H1 (cell line): ENCODE measurements at regions of chr18 and their contacts with region 1.

Region 1: GRCh38 chr18:35756506-35757117 is 175.1 kb downstream of the GALNT1 start:
- DNase-seq: peak; percentile 19 to 67
- H3K4me3 ChIP-seq: no peak overlapping the region
- H3K27ac ChIP-seq: no peak overlapping the region
- H3K4me1 ChIP-seq: peaks cover 0 to 7% (median 1%) of the 10 kb centered on the region in 4 experiments; a peak in 3 of 7 replicates
- H3K27me3 ChIP-seq: no peaks in the 10 kb centered on the region
- CTCF ChIP-seq: peak in 2 of 3 experiments; percentile 73 to 81; a peak in 3 of 4 replicates
- EP300 ChIP-seq: no peak
- POLR2A ChIP-seq: no peak
- RAD21 ChIP-seq: peak; percentile 99 to 100

Region 2: DNA sequence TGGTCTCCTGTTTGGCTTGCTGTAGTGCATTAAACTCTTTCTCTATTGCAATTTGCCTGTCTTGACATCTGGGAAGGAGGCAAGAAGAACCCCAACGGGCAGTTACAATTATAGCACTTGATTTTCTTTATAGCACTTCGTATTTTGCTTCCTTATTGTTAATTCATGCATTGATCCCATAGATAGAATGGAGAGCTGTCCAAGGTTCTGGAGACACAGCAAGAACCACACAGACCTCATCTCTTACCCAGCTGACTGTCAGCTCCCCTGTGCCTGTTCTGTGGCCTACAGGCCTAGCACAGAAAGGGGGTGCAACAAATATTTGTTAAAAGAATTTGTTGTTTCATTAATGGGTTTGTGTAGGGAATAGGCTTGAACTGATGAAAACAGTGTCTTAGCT is 19.3 kb after region 1 on chr18:
- CTCF ChIA-PET with region 1: interaction called, 13 read pairs
- POLR2A ChIA-PET with region 1: no interaction called
- DNase-seq: no peak
- H3K4me3 ChIP-seq: no peak overlapping the region
- H3K27ac ChIP-seq: no peak overlapping the region
- H3K4me1 ChIP-seq: no peaks in the 10 kb centered on the region
- H3K27me3 ChIP-seq: no peaks in the 10 kb centered on the region
- CTCF ChIP-seq: no peak
- EP300 ChIP-seq: no peak
- POLR2A ChIP-seq: no peak
- RAD21 ChIP-seq: no peak

Region 3: DNA sequence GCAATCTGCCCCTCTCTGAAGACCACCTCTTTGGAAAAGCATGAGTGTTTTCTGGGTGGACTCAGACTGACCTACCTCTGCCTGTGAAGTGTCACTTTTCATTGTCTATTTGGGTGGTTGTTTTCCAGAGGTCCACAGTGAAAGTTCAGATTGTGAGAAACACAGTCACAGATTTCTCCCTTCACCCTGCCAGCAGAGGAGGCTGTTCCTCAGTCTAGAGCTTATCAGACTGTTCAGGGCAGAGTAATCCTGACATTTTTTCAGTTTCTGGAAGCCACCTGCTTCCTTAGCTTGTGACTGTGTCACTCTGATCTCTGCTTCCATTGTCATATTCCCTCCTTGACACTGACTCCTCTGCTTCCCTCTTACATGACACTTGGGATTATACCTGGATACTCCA is 160.4 kb after region 1 on chr18:
- CTCF ChIA-PET with region 1: interaction called, 10 read pairs
- POLR2A ChIA-PET with region 1: no interaction called
- DNase-seq: no peak
- H3K4me3 ChIP-seq: no peak overlapping the region
- H3K27ac ChIP-seq: no peak overlapping the region
- H3K4me1 ChIP-seq: peaks cover 0 to 4% (median 3%) of the 10 kb centered on the region in 4 experiments; a peak in 5 of 7 replicates
- H3K27me3 ChIP-seq: no peaks in the 10 kb centered on the region
- CTCF ChIP-seq: peak in 2 of 3 experiments; percentile 46 to 58; a peak in 3 of 4 replicates
- EP300 ChIP-seq: no peak
- POLR2A ChIP-seq: no peak
- RAD21 ChIP-seq: peak; percentile 43 to 58

Region 4: GRCh38 chr18:35939138-35939537 is 182.5 kb after region 1 on chr18:
- CTCF ChIA-PET with region 1: interaction called, 28 read pairs
- POLR2A ChIA-PET with region 1: no interaction called
- DNase-seq: no peak
- H3K4me3 ChIP-seq: no peak overlapping the region
- H3K27ac ChIP-seq: no peak overlapping the region
- H3K4me1 ChIP-seq: peaks cover 0 to 9% (median 5%) of the 10 kb centered on the region in 4 experiments; a peak in 5 of 7 replicates
- H3K27me3 ChIP-seq: no peaks in the 10 kb centered on the region
- CTCF ChIP-seq: peak; percentile 63 to 83 (median 82)
- EP300 ChIP-seq: no peak
- POLR2A ChIP-seq: no peak
- RAD21 ChIP-seq: peak; percentile 73 to 83

Region 5: GRCh38 chr18:35949903-35950627 is 193.5 kb after region 1 on chr18:
- CTCF ChIA-PET with region 1: interaction called, 23 read pairs
- POLR2A ChIA-PET with region 1: interaction called, 5 read pairs
- DNase-seq: peak in 1 of 2 experiments; percentile 86
- H3K4me3 ChIP-seq: peak overlapping the region; percentile 75 to 87 (median 80)
- H3K27ac ChIP-seq: no peak overlapping the region
- H3K4me1 ChIP-seq: peaks cover 0 to 7% (median 2%) of the 10 kb centered on the region in 4 experiments; a peak in 4 of 7 replicates
- H3K27me3 ChIP-seq: no peaks in the 10 kb centered on the region
- CTCF ChIP-seq: peak; percentile 69 to 86 (median 75)
- EP300 ChIP-seq: peak in 1 of 2 experiments; percentile 11; a peak in 1 of 3 replicates
- POLR2A ChIP-seq: peak in 1 of 2 experiments; percentile 15; a peak in 1 of 3 replicates
- RAD21 ChIP-seq: peak; percentile 59 to 75